Breast epithelium (tissue), 4 donors: ENCODE measurements at regions of chr12 and their contacts with region 1.

Region 1: GRCh38 chr12:50734409-50735263 is 29.3 kb upstream of the ATF1 start:
- DNase-seq: no peak
- H3K4me3 ChIP-seq: no peak overlapping the region
- H3K27ac ChIP-seq: no peak overlapping the region
- H3K4me1 ChIP-seq: no peaks in the 10 kb centered on the region
- H3K27me3 ChIP-seq: no peaks in the 10 kb centered on the region
- CTCF ChIP-seq: peak in 2 of 3 donors; percentile 27 to 28
- POLR2A ChIP-seq: no peak

Region 2: DNA sequence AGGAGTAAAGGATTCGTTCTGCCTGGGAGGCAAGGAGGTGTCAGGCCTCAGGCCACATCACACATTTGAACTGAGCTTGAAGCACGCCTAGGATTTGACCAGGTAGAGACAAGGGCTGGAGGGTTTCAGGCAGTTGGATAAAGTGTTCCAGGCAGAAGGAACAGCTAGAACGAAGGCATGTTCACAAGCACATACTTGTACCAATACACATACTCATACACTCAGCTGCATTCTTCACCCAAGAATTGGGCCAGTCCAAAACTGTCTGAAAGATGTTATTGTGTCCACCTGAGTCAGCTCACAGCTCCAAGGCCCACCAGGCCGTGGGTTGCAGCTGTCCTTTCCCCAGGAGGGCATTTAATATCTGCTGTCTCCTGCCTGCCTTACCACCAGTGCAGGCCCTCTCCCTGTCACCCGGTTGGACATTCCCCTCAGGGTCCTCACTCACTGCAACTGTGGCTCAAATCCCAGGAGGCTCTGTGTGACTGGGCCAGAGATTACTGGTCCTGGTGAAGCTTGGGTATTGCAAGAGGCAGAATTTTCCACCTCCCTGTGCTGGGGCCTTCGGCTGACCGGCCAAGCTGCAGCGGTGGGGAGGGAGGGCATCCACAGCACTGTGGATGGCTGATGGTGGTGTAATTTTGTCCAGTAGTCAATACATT is 796.9 kb before region 1 on chr12:
- intact Hi-C with region 1: loop called (anchors 5 kb)
- DNase-seq: peak; percentile 37 to 40
- H3K4me3 ChIP-seq: no peak overlapping the region
- H3K27ac ChIP-seq: peak overlapping the region in 1 of 2 donors; percentile 43
- H3K4me1 ChIP-seq: no peaks in the 10 kb centered on the region
- H3K27me3 ChIP-seq: no peaks in the 10 kb centered on the region
- CTCF ChIP-seq: no peak
- POLR2A ChIP-seq: no peak

Region 3: DNA sequence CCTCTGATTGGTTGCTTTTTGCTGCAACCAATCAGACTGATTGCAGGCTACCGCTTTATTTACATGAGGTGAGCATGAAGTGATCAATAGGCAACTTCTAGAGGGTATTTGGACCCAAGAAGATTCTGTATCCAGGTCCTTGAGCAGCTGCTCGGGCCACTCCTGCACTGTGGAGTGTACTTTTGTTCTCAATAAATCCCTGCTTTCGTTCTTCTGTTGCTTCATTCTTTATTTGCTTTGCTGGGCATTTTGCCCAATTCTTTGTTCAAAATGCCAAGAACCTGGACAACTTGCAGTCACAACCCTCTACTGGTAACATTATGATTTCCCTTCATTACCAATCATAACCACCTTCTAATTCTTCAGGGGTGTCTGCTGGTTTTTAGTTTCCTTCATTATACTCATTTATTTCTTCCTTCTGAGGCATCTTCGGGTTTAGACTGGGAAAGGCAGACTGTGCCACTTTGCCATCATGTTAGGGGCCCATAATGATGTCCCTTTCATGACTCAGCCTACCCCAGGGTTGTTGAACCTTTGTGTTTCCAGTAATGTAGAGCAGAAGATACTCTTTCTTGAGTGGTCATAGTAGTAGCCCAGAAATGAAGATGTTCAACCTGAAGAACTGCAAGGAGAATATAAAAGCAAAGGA is 407.9 kb before region 1 on chr12:
- intact Hi-C with region 1: no loop called
- DNase-seq: no peak
- H3K4me3 ChIP-seq: no peak overlapping the region
- H3K27ac ChIP-seq: no peak overlapping the region
- H3K4me1 ChIP-seq: peaks cover 0 to 3% of the 10 kb centered on the region in 2 donors
- H3K27me3 ChIP-seq: no peaks in the 10 kb centered on the region
- CTCF ChIP-seq: peak in 1 of 3 donors; percentile 28
- POLR2A ChIP-seq: no peak

Region 4: GRCh38 chr12:50647479-50647878 is 87.2 kb before region 1 on chr12:
- intact Hi-C with region 1: no loop called
- DNase-seq: no peak
- H3K4me3 ChIP-seq: no peak overlapping the region
- H3K27ac ChIP-seq: no peak overlapping the region
- H3K4me1 ChIP-seq: no peaks in the 10 kb centered on the region
- H3K27me3 ChIP-seq: no peaks in the 10 kb centered on the region
- CTCF ChIP-seq: no peak
- POLR2A ChIP-seq: no peak

Region 5: DNA sequence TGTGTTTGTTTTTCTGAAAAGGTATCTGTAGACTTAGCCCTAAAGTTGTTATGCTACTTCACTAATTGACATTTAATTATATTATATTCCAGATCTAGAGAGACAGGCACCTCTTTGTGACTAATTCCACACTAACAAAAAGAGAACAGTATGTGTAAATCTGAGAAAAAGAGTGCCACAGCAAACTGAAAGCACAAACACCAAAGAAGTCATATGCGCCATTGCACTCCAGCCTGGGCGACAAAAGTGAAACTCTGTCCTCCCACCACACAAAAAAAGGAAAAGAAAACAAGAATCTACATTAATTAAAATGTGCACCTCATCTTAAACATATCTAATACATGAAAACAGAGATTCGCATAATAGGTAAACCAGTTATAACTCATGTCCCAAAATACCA is 353.2 kb after region 1 on chr12:
- intact Hi-C with region 1: no loop called
- DNase-seq: no peak
- H3K4me3 ChIP-seq: no peak overlapping the region
- H3K27ac ChIP-seq: no peak overlapping the region
- H3K4me1 ChIP-seq: no peaks in the 10 kb centered on the region
- H3K27me3 ChIP-seq: no peaks in the 10 kb centered on the region
- CTCF ChIP-seq: no peak
- POLR2A ChIP-seq: no peak